ENCODE measurements at regions of chr1 and their contacts with region 1.

Region 1: DNA sequence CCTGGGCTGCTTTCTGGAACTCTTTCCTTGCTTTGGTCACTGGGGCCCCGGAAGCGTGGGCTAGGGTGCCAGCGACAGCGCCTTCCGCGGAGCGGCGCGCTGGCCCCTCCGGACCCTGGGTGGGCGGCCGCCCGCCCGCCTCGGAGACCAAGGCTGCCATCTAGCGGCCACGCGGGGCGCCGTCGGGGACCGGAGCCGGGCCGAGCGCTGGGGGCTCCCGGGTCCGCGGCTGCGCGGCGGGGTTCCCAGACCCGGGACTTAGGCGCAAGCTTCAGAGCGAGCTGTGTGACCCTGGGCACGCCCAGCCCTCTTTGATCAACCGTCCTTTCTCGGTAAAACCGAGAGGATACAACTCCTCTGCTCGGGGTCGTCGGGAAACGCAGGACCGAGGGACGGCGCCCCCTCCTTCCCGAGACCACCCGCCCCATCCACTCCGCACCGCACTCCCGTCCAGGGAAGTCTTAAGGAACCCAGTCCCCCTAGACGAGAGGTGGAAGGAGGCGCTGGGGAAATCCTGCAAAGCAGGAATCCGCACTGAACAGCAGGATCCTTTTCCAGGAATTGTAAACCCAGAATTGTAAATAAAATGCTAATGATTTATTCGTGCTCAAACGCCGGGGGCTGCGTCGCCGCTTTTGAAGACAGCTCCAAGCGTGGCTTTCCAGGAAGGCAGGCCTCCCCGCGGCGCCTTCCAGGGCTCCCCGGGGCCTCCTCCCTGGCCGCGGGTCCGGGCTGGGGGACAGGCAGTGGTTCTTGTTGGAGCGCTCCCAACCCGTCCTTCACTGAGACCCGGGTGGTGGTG is 41.2 kb downstream of the RRAGC start:
- DNase-seq: peak in 1 of 2 donors; percentile 31
- ATAC-seq: peak; percentile 62

Region 2: DNA sequence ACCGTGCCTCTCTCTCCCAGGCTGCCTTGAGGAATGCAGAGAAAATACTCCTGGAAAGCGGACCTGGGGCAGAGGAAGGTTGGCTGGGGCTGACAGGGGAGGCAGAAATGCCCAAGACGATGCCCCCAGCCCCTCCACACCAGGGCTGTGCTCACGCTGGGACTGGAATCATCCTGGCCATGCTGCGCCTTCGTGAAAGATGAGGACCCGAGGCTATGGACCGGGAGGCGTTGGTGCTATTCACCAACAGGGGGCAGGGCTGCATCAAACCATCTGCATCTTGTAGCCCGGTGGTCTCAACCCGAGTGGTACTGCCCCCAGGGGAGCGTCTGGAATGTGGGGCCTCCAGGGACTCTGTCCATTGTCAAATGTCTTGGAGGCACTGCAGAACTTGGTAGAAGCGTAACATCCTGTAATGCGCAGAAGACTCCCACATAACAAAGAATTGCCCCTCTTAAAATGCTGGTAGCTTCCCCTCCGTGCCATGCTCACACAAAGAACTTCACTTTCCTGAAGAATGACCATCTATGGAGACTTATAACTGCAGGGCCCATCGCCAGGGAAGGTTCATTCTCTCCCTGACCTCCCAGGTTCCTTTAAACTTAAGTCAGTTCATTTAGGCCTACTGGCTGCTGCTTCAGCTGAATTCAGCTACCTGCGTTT is 210.0 kb before region 1 on chr1:
- intact Hi-C with region 1: loop called in 1 of 2 experiments (anchors 10 kb)
- DNase-seq: peak in 1 of 2 donors; percentile 23
- ATAC-seq: no peak

Region 3: GRCh38 chr1:39132505-39133339 is 314.3 kb after region 1 on chr1:
- intact Hi-C with region 1: no loop called
- DNase-seq: peak; percentile 75 to 79
- ATAC-seq: peak; percentile 71

Measured in left colon (tissue), 2 donors.